GM18951 (cell line): ENCODE measurements at regions of chrX and their contacts with region 1.

Region 1: DNA sequence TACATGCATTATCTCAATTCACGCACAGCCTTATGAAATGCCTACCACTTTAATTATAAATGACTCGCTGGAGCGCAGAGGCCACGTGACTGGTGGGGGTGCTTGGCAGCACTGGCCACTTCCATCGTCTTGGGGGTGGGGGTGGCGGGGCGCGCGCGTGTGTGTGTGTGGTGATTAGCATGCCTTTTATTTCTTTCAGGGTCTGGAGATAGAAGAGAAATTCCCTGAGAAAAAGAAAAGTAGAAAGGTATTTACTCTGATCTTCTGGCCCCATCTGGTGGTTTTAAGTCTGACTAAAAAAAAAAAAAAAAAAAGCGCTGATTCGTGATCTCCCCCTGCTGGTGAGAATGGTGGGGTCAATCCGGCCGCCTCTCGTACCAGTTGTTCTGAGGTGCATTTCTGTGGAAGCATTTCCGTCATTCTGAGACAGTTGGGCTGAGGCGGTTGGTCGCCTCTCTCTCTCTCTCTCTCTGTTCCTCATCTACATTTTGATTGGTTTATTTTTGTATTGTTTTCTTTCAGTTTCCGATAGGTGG is at the start of gene CCNB3:
- POLR2A ChIP-seq: peak; percentile 21

Region 2: GRCh38 chrX:50081282-50081889 is 123.0 kb before region 1 on chrX:
- in situ Hi-C with region 1: no loop called
- POLR2A ChIP-seq: no peak

Region 3: GRCh38 chrX:50565718-50566117 is 361.3 kb after region 1 on chrX:
- in situ Hi-C with region 1: loop called (anchors 25 kb)
- POLR2A ChIP-seq: no peak